Endothelial cell of umbilical vein (primary cell): ENCODE measurements at regions of chr15 and their contacts with region 1.

Region 1: GRCh38 chr15:53808058-53808706 is 48.7 kb upstream of the WDR72 start:
- DNase-seq: peak; percentile 7
- H3K4me3 ChIP-seq: no peak overlapping the region
- H3K27ac ChIP-seq: no peak overlapping the region
- H3K4me1 ChIP-seq: no peaks in the 10 kb centered on the region
- H3K27me3 ChIP-seq: no peaks in the 10 kb centered on the region
- CTCF ChIP-seq: peak; percentile 18 to 25
- POLR2A ChIP-seq: no peak

Region 2: GRCh38 chr15:53880357-53880756 is 72.2 kb after region 1 on chr15:
- CTCF ChIA-PET with region 1: no interaction called
- POLR2A ChIA-PET with region 1: no interaction called
- dilution Hi-C with region 1: no loop called
- intact Hi-C with region 1: no loop called
- DNase-seq: no peak
- H3K4me3 ChIP-seq: no peak overlapping the region
- H3K27ac ChIP-seq: no peak overlapping the region
- H3K4me1 ChIP-seq: no peaks in the 10 kb centered on the region
- H3K27me3 ChIP-seq: no peaks in the 10 kb centered on the region
- CTCF ChIP-seq: no peak
- POLR2A ChIP-seq: no peak

Region 3: DNA sequence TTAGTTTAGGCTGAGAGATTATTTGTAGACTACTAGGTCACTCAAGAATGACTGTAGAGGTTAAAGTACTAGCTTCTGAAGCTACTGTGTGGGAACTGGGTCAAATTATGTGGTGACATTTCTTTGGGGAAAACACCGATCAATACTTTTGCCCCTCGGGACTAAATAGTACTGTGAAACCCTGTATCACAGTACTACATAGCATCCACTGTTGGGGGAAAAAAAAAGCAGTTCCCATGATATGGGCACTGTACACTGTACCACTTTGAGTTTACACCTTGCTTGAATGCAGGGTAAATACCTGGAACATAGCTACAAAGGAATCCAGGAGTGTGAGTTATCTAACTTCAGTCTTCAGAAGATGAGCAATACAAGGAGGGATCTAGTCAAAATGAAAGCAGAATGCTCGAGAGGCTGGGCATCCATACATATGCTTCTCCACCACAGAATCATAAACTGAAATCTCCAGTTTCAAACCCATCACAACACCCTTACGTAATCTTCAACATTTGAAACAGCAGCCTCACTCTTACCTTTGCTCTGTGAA is 481.5 kb after region 1 on chr15:
- CTCF ChIA-PET with region 1: no interaction called
- POLR2A ChIA-PET with region 1: no interaction called
- dilution Hi-C with region 1: no loop called
- intact Hi-C with region 1: no loop called
- DNase-seq: no peak
- H3K4me3 ChIP-seq: no peak overlapping the region
- H3K27ac ChIP-seq: no peak overlapping the region
- H3K4me1 ChIP-seq: no peaks in the 10 kb centered on the region
- H3K27me3 ChIP-seq: no peaks in the 10 kb centered on the region
- CTCF ChIP-seq: no peak
- POLR2A ChIP-seq: no peak

Region 4: GRCh38 chr15:55108858-55109518 is 1300.8 kb after region 1 on chr15:
- CTCF ChIA-PET with region 1: no interaction called
- POLR2A ChIA-PET with region 1: no interaction called
- dilution Hi-C with region 1: no loop called
- intact Hi-C with region 1: loop called (anchors 5 kb)
- DNase-seq: peak; percentile 39
- H3K4me3 ChIP-seq: no peak overlapping the region
- H3K27ac ChIP-seq: no peak overlapping the region
- H3K4me1 ChIP-seq: no peaks in the 10 kb centered on the region
- H3K27me3 ChIP-seq: no peaks in the 10 kb centered on the region
- CTCF ChIP-seq: peak; percentile 83 to 85
- POLR2A ChIP-seq: no peak